H1 (cell line): ENCODE measurements at regions of chr22 and their contacts with region 1.

Region 1: GRCh38 chr22:37566903-37567820 is 6.9 kb downstream of the CDC42EP1 start:
- DNase-seq: peak in 1 of 2 experiments; percentile 98
- H3K4me3 ChIP-seq: no peak overlapping the region
- H3K27ac ChIP-seq: no peak overlapping the region
- H3K4me1 ChIP-seq: peaks cover 13 to 35% (median 20%) of the 10 kb centered on the region in 4 experiments
- H3K27me3 ChIP-seq: no peaks in the 10 kb centered on the region; a peak in 1 of 7 replicates
- CTCF ChIP-seq: peak; percentile 89 to 98 (median 98)
- EP300 ChIP-seq: no peak
- POLR2A ChIP-seq: no peak
- RAD21 ChIP-seq: peak; percentile 99 to 100

Region 2: GRCh38 chr22:37472418-37473006 is 94.7 kb before region 1 on chr22:
- CTCF ChIA-PET with region 1: interaction called, 21 read pairs
- POLR2A ChIA-PET with region 1: no interaction called
- DNase-seq: peak in 1 of 2 experiments; percentile 83
- H3K4me3 ChIP-seq: no peak overlapping the region; a peak in 1 of 8 replicates
- H3K27ac ChIP-seq: no peak overlapping the region
- H3K4me1 ChIP-seq: no peaks in the 10 kb centered on the region; a peak in 3 of 7 replicates
- H3K27me3 ChIP-seq: no peaks in the 10 kb centered on the region; a peak in 1 of 7 replicates
- CTCF ChIP-seq: peak; percentile 85 to 92 (median 89)
- EP300 ChIP-seq: no peak
- POLR2A ChIP-seq: no peak
- RAD21 ChIP-seq: peak; percentile 66 to 71

Region 3: GRCh38 chr22:37486224-37486845 is 80.8 kb before region 1 on chr22 and contains the start of gene MFNG:
- CTCF ChIA-PET with region 1: interaction called, 15 read pairs
- POLR2A ChIA-PET with region 1: interaction called, 4 read pairs
- DNase-seq: peak in 1 of 2 experiments; percentile 83
- H3K4me3 ChIP-seq: peak within 1 kb of the TSS in 2 of 4 experiments; percentile 23 to 40; a peak in 3 of 8 replicates
- H3K27ac ChIP-seq: no peak within 1 kb of the TSS
- H3K4me1 ChIP-seq: peaks cover 0 to 32% (median 21%) of the 10 kb centered on the region in 4 experiments; a peak in 6 of 7 replicates
- H3K27me3 ChIP-seq: peaks cover 0 to 4% (median 0%) of the 10 kb centered on the region in 4 experiments; a peak in 1 of 7 replicates
- CTCF ChIP-seq: peak in 1 of 3 experiments; percentile 32; a peak in 1 of 4 replicates
- EP300 ChIP-seq: no peak
- POLR2A ChIP-seq: no peak
- RAD21 ChIP-seq: no peak
- total RNA-seq, gene MFNG: 1.7 and 1.8 TPM in 2 replicates

Region 4: GRCh38 chr22:37538590-37539357 is 28.4 kb before region 1 on chr22:
- CTCF ChIA-PET with region 1: interaction called, 1,347 read pairs
- POLR2A ChIA-PET with region 1: interaction called, 198 read pairs
- DNase-seq: peak; percentile 88 to 95
- H3K4me3 ChIP-seq: no peak overlapping the region
- H3K27ac ChIP-seq: no peak overlapping the region
- H3K4me1 ChIP-seq: peaks cover 0 to 4% (median 0%) of the 10 kb centered on the region in 4 experiments; a peak in 2 of 7 replicates
- H3K27me3 ChIP-seq: no peaks in the 10 kb centered on the region; a peak in 1 of 7 replicates
- CTCF ChIP-seq: peak; percentile 99 to 100 (median 99)
- EP300 ChIP-seq: no peak
- POLR2A ChIP-seq: no peak
- RAD21 ChIP-seq: peak; percentile 100

Region 5: DNA sequence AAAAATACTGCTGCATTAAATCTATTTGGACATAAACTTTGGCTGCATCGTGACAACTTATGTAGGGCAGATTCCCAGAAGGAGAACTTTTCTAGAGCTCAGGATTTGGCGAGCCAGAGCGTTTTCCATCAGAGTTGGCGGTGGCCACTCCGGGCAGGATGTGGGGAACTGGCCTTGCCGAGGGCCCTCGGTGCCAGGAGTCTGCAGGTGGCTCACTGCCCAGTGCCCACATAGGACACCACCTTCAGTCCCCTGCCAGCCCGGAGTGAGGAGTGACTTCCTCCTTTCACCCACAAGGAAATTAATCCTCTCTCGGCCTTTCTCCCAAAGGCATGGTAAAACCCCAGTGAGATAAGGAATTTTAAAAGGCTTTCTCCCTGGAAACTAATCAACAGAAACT is 14.3 kb after region 1 on chr22:
- CTCF ChIA-PET with region 1: interaction called, 185 read pairs
- POLR2A ChIA-PET with region 1: interaction called, 11 read pairs
- DNase-seq: no peak
- H3K4me3 ChIP-seq: no peak overlapping the region
- H3K27ac ChIP-seq: no peak overlapping the region
- H3K4me1 ChIP-seq: peaks cover 0 to 8% (median 2%) of the 10 kb centered on the region in 4 experiments; a peak in 4 of 7 replicates
- H3K27me3 ChIP-seq: no peaks in the 10 kb centered on the region
- CTCF ChIP-seq: no peak
- EP300 ChIP-seq: no peak
- POLR2A ChIP-seq: no peak
- RAD21 ChIP-seq: no peak

Region 6: GRCh38 chr22:37608477-37609239 is 41.5 kb after region 1 on chr22 and contains the start of gene GGA1:
- CTCF ChIA-PET with region 1: interaction called, 29 read pairs
- POLR2A ChIA-PET with region 1: interaction called, 3 read pairs
- DNase-seq: peak; percentile 83 to 90
- H3K4me3 ChIP-seq: peak within 1 kb of the TSS; percentile 69 to 91 (median 82)
- H3K27ac ChIP-seq: peak within 1 kb of the TSS; percentile 93
- H3K4me1 ChIP-seq: peaks cover 0 to 8% (median 6%) of the 10 kb centered on the region in 4 experiments; a peak in 6 of 7 replicates
- H3K27me3 ChIP-seq: no peaks in the 10 kb centered on the region
- CTCF ChIP-seq: no peak; a peak in 1 of 4 replicates
- EP300 ChIP-seq: 0 out of 3 replicates have a peak, but pooled peaks of 1 of the 2 experiments have one; percentile 9
- POLR2A ChIP-seq: peak; percentile 35 to 83
- RAD21 ChIP-seq: no peak
- total RNA-seq, gene GGA1: 46.5 and 49.3 TPM in 2 replicates

Region 7: GRCh38 chr22:37623075-37624016 is 56.2 kb after region 1 on chr22:
- CTCF ChIA-PET with region 1: no interaction called
- POLR2A ChIA-PET with region 1: no interaction called
- DNase-seq: peak in 1 of 2 experiments; percentile 95
- H3K4me3 ChIP-seq: no peak overlapping the region
- H3K27ac ChIP-seq: no peak overlapping the region
- H3K4me1 ChIP-seq: peaks cover 0 to 3% (median 0%) of the 10 kb centered on the region in 4 experiments; a peak in 3 of 7 replicates
- H3K27me3 ChIP-seq: no peaks in the 10 kb centered on the region
- CTCF ChIP-seq: peak; percentile 50 to 72 (median 69)
- EP300 ChIP-seq: no peak
- POLR2A ChIP-seq: no peak
- RAD21 ChIP-seq: peak; percentile 60 to 72

Region 8: DNA sequence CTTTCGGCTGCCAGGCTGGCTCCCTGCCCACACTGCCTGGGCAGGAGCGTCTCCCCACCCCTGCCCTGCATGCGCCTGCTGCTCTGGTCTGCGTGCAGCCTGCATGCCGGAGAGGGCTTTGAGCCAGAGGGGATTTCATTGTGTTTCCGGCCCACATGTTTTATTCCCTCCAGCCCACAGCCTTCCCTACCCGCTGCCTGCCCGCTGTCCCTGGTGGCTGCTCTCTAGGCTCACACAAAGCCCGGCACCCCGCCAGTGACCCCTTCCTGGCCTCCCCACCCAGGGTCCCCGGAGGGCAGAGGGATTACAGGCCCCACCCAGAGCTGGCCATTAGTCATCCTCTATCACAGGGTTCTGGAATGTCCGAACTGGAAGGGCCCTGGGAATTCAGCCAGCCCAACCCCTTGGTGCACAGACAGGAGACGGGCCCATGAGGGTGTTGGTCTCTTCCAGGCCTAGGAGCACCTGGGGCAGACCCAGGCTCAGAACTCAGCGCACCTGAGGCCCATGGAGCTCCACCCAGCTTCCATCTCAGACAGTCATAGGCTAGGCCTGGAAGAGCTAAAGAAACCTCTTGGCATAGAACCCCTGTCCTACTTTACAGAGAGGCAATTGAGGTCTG is 185.4 kb after region 1 on chr22:
- CTCF ChIA-PET with region 1: no interaction called
- POLR2A ChIA-PET with region 1: no interaction called
- DNase-seq: no peak
- H3K4me3 ChIP-seq: no peak overlapping the region
- H3K27ac ChIP-seq: no peak overlapping the region
- H3K4me1 ChIP-seq: peaks cover 0 to 13% (median 5%) of the 10 kb centered on the region in 4 experiments; a peak in 4 of 7 replicates
- H3K27me3 ChIP-seq: peaks cover 0 to 4% (median 2%) of the 10 kb centered on the region in 4 experiments; a peak in 3 of 7 replicates
- CTCF ChIP-seq: no peak
- EP300 ChIP-seq: no peak
- POLR2A ChIP-seq: no peak
- RAD21 ChIP-seq: no peak